Activated CD4-positive, alpha-beta T cell treated with anti-CD3 and anti-CD28 coated beads, Interleukin-2, amount 10 ng/mL, durations not matched to agents 24 days and 14 days (primary cell): ENCODE measurements at regions of chr9 and their contacts with region 1.

Region 1: GRCh38 chr9:124708633-124709291 is 62.3 kb downstream of the NR6A1 start:
- DNase-seq: peak; percentile 18
- H3K4me3 Mint-ChIP-seq: no peak overlapping the region
- H3K27ac Mint-ChIP-seq: no peak overlapping the region
- H3K4me1 Mint-ChIP-seq: peaks cover 2% of the 10 kb centered on the region
- H3K27me3 Mint-ChIP-seq: peaks cover 25% of the 10 kb centered on the region

Region 2: GRCh38 chr9:124180557-124180956 is 528.2 kb before region 1 on chr9:
- intact Hi-C with region 1: no loop called
- DNase-seq: no peak
- H3K4me3 Mint-ChIP-seq: no peak overlapping the region
- H3K27ac Mint-ChIP-seq: no peak overlapping the region
- H3K4me1 Mint-ChIP-seq: no peaks in the 10 kb centered on the region
- H3K27me3 Mint-ChIP-seq: peaks cover 25% of the 10 kb centered on the region

Region 3: GRCh38 chr9:124399323-124399967 is 309.3 kb before region 1 on chr9:
- intact Hi-C with region 1: no loop called
- DNase-seq: no peak
- H3K4me3 Mint-ChIP-seq: no peak overlapping the region
- H3K27ac Mint-ChIP-seq: no peak overlapping the region
- H3K4me1 Mint-ChIP-seq: peaks cover 12% of the 10 kb centered on the region
- H3K27me3 Mint-ChIP-seq: no peaks in the 10 kb centered on the region

Region 4: DNA sequence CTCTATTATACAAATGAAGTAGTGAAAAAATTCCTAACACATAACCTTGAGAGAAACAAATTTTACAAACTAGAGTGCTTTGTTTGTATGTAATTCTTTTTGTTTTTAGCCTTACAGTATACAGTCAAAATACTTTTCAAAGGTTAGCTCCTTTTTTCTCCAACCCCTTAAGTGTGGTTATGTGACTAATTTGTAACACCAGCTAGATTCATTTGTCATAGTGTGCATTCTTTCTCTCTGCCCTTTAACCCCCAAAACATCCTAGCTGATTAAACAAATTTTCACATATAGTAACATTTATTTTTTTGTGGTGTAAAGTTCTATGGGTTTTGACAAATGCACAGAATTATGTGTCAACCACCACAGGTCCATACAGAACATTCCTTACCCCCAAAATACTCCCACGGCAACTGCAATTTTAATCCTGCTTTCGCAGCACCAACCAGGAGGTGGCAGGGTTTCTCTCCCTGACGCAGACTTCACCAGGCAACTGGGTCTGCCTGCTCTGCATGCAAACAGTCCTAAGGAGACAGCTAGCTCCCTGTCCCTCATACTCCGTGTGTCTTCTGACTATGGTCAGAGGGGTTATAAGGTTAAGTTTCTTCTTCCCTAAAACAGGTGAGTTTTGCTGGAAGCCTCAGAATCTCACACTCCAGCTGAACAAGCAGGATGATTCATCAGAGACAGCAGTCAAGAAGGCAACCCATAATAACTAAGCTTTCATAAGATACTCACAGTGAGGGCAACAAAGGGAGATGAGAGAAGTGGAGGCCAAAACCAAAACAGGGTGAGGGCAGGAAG is 157.1 kb before region 1 on chr9:
- intact Hi-C with region 1: loop called (anchors 2 kb)
- DNase-seq: peak; percentile 79
- H3K4me3 Mint-ChIP-seq: no peak overlapping the region
- H3K27ac Mint-ChIP-seq: no peak overlapping the region
- H3K4me1 Mint-ChIP-seq: peaks cover 10% of the 10 kb centered on the region
- H3K27me3 Mint-ChIP-seq: peaks cover 1% of the 10 kb centered on the region

Region 5: GRCh38 chr9:124743686-124744348 is 35.1 kb after region 1 on chr9:
- intact Hi-C with region 1: no loop called
- DNase-seq: no peak
- H3K4me3 Mint-ChIP-seq: no peak overlapping the region
- H3K27ac Mint-ChIP-seq: peak overlapping the region; percentile 72
- H3K4me1 Mint-ChIP-seq: peaks cover 12% of the 10 kb centered on the region
- H3K27me3 Mint-ChIP-seq: peaks cover 7% of the 10 kb centered on the region

Region 6: DNA sequence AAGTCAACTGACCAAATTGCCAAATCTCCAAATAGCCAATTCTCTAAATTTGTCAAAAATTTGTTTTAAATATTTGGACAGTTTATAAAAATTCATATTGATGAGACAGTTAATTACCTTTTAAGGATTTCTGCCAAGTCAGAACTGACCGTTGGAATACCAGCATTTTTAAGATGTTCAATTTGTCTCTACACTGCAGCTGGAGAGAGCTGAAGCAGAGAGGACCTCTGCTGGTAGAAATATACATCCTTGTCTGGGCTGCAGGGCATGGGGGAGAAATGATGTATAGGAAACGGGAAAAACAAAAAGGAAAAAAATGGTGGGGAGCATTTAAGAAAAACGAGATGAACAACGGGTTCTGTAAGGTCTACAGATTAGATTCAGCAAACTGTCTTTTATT is 45.5 kb after region 1 on chr9:
- intact Hi-C with region 1: loop called (anchors 2 kb)
- DNase-seq: no peak
- H3K4me3 Mint-ChIP-seq: no peak overlapping the region
- H3K27ac Mint-ChIP-seq: no peak overlapping the region
- H3K4me1 Mint-ChIP-seq: peaks cover 5% of the 10 kb centered on the region
- H3K27me3 Mint-ChIP-seq: peaks cover 63% of the 10 kb centered on the region